Posterior vena cava (tissue), 2 donors: ENCODE measurements at regions of chr3 and their contacts with region 1.

Region 1: DNA sequence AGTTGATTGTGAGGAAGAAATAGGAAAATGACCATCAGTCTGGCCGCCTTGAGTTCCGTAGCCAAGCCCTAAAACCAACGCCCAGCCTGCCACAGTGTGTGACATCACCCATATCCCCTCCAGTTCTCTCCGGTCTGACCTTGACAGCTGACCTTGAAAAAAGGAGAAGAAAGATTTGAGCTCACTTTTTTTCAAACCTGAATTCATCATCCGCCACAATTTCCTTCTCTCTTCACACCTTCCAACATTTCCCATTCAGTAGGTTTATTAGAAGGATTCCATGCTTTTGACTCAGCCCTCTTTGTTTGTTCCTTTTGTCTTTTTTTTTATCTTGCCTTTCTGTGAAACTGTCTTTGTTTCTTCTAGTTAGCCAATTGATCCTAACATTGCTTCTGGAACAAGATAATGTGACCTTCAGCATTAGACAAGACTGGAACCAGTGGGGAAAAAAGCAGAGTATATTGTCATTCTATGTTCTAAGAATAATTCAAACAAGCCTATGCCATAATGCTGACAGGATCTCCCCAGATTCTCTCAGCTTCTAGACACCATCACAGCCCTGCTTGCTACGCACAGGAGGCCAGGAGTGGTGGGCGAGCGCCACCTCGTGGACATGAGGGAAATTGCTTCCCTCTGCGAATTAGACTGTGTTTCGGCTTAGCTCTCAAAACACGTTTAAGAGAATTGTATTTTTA is 283.1 kb downstream of the FGF12 start:
- DNase-seq: peak; percentile 86

Region 2: GRCh38 chr3:190533511-190534277 is 1910.5 kb before region 1 on chr3:
- intact Hi-C with region 1: no loop called
- DNase-seq: peak; percentile 93

Region 3: DNA sequence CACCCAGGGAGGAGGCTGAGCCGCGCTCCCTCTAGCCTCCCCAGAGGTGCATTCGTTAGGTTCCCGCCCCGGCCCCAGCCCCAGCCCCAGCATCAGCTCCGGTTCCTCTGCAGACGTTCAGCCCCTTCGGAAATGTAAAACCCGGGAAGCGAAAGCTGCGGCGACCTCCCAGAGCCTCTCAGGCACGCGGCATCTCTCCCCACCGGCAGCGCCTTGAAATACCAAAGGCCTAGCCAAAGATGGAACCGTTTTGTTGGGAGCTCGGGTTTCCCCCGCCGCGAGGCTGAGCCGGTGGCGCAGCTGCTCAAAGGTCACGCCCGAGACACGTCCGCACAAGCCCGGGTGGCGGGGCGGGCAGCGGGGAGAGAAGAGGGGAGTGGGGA is 1613.9 kb after region 1 on chr3:
- intact Hi-C with region 1: loop called in 1 of 2 experiments (anchors 10 kb)
- DNase-seq: peak; percentile 87